ENCODE measurements at regions of chr1 and their contacts with region 1.

Region 1: DNA sequence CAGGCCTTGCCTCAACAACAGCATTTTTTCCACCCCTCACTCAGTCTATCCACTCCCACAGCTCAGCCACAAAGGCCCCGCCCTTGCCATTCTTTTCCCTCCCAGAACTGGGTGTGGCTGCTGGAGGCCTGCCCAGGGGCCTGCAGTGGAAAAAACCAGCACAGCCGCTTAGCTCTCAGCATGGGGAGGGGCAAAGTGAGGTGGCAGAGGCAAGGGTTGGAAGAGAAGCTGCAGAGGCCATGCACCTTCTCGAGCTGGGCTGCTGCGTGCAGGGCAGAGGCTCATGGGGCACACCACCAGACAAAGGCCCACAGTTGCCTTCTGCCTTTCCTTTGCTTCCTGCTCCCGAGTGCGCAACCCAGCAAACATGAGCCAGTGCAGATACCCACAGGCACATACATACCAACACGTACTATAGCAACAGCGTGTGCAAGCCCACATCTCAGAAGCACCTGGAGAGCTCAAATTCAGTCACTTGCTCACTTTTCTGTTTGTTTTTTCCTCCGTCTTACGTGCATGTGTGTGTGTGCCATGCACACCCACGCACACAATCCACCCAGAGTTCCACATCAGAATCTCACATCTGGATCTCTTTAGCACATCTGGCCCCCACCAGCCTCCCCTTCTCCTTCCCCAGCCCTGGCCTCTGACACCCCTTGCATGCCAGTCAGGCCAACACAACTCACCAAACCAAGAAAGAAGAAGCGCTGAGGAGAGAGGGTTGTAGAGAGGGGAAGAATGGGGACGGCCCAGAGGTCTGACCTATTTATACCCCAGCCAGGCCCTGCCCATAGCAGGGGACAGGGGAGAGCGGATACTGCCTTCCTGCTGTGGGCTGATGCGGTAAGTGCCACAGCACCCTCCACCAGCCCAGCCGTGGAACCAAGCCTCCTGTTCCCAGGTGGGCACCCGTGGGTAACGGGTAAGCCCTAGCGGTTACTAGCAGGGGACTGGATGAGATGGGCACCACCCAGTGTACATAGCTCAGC is at the start of gene S100A4:
- DNase-seq: peak; percentile 47 to 91 (median 83)
- ATAC-seq: peak; percentile 74
- H3K4me3 ChIP-seq: peak within 1 kb of the TSS; percentile 56 to 64
- H3K4me3 Mint-ChIP-seq: peak within 1 kb of the TSS; percentile 87
- H3K27ac ChIP-seq: peak within 1 kb of the TSS; percentile 66 to 69
- H3K27ac Mint-ChIP-seq: peak within 1 kb of the TSS; percentile 91
- H3K4me1 ChIP-seq: peaks cover 65% of the 10 kb centered on the region
- H3K4me1 Mint-ChIP-seq: peaks cover 66% of the 10 kb centered on the region
- H3K27me3 ChIP-seq: no peaks in the 10 kb centered on the region
- H3K27me3 Mint-ChIP-seq: no peaks in the 10 kb centered on the region
- CTCF ChIP-seq: no peak
- total RNA-seq, gene S100A4: 172 to 177 TPM

Region 2: GRCh38 chr1:153561466-153561985 is 16.2 kb after region 1 on chr1:
- CTCF ChIA-PET with region 1: interaction called, 8 read pairs
- POLR2A ChIA-PET with region 1: interaction called, 12 read pairs
- intact Hi-C with region 1: loop called in 1 of 2 experiments (anchors 2 kb)
- DNase-seq: no peak
- ATAC-seq: no peak
- H3K4me3 ChIP-seq: no peak overlapping the region
- H3K4me3 Mint-ChIP-seq: no peak overlapping the region
- H3K27ac ChIP-seq: no peak overlapping the region
- H3K27ac Mint-ChIP-seq: no peak overlapping the region
- H3K4me1 ChIP-seq: peaks cover 11% of the 10 kb centered on the region
- H3K4me1 Mint-ChIP-seq: peaks cover 7% of the 10 kb centered on the region
- H3K27me3 ChIP-seq: no peaks in the 10 kb centered on the region
- H3K27me3 Mint-ChIP-seq: no peaks in the 10 kb centered on the region
- CTCF ChIP-seq: no peak

Region 3: GRCh38 chr1:153566440-153567379 is 21.3 kb after region 1 on chr1:
- CTCF ChIA-PET with region 1: interaction called, 41 read pairs
- POLR2A ChIA-PET with region 1: interaction called, 7 read pairs
- intact Hi-C with region 1: loop called (anchors 1 to 2 kb)
- DNase-seq: peak; percentile 38 to 90 (median 80)
- ATAC-seq: peak; percentile 82
- H3K4me3 ChIP-seq: no peak overlapping the region
- H3K4me3 Mint-ChIP-seq: no peak overlapping the region
- H3K27ac ChIP-seq: peak overlapping the region in 1 of 2 experiments; percentile 67
- H3K27ac Mint-ChIP-seq: peak overlapping the region; percentile 69
- H3K4me1 ChIP-seq: peaks cover 17% of the 10 kb centered on the region
- H3K4me1 Mint-ChIP-seq: peaks cover 26% of the 10 kb centered on the region
- H3K27me3 ChIP-seq: no peaks in the 10 kb centered on the region
- H3K27me3 Mint-ChIP-seq: peaks cover 8% of the 10 kb centered on the region
- CTCF ChIP-seq: no peak

Region 4: GRCh38 chr1:153608742-153609584 is 63.6 kb after region 1 on chr1:
- CTCF ChIA-PET with region 1: no interaction called
- POLR2A ChIA-PET with region 1: no interaction called
- intact Hi-C with region 1: no loop called
- DNase-seq: no peak
- ATAC-seq: no peak
- H3K4me3 ChIP-seq: no peak overlapping the region
- H3K4me3 Mint-ChIP-seq: no peak overlapping the region
- H3K27ac ChIP-seq: no peak overlapping the region
- H3K27ac Mint-ChIP-seq: peak overlapping the region; percentile 14
- H3K4me1 ChIP-seq: no peaks in the 10 kb centered on the region
- H3K4me1 Mint-ChIP-seq: no peaks in the 10 kb centered on the region
- H3K27me3 ChIP-seq: no peaks in the 10 kb centered on the region
- H3K27me3 Mint-ChIP-seq: no peaks in the 10 kb centered on the region
- CTCF ChIP-seq: no peak

Region 5: DNA sequence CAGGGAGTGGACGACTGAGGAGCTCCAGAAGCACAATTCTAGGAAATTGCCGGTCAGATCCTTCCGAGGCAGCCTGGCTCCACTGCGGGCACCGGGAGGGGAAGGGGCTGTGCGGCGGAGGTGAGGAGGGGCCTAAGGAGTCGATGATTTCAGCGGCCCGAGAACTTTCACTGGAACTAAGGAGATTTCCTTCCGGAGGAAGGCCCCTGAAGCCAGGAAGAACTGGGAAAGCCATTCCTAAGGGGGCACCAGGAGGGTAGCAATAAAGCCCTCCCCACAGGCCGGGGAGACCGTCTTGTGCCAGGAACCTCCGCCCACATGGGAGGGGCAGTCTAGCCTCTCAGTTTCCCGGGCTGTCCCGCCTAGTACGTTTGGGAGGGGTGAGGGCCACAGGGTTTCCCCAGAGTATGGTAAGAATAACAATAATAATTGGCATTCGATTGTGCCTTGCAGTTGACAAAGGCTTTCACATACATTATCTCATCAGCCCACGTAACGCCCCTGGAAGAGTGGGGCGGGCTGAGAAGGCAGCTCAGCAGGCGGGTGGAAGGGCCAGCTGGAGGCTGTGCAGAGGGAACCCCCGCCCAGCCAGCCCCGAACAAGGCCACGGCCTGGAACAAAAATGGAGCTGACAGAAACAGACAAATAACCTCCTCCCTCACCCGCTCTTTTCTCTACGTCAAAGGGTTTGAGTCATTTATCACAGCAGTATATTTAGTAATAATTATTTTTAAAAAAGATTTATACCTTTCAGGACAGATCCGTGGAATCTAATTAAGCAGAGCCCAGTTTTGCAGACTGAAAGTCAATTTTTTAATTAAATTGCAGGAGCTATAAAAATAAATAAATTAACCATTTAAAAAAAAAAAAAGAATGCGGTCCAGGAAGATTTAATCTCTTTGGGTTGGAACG is 152.9 kb after region 1 on chr1:
- CTCF ChIA-PET with region 1: no interaction called
- POLR2A ChIA-PET with region 1: no interaction called
- intact Hi-C with region 1: no loop called
- DNase-seq: no peak
- ATAC-seq: no peak
- H3K4me3 ChIP-seq: no peak overlapping the region
- H3K4me3 Mint-ChIP-seq: no peak overlapping the region
- H3K27ac ChIP-seq: no peak overlapping the region
- H3K27ac Mint-ChIP-seq: no peak overlapping the region
- H3K4me1 ChIP-seq: no peaks in the 10 kb centered on the region
- H3K4me1 Mint-ChIP-seq: peaks cover 2% of the 10 kb centered on the region
- H3K27me3 ChIP-seq: peaks cover 0 to 4% of the 10 kb centered on the region in 2 experiments
- H3K27me3 Mint-ChIP-seq: no peaks in the 10 kb centered on the region
- CTCF ChIP-seq: no peak

Region 6: GRCh38 chr1:154419620-154420571 is 874.5 kb after region 1 on chr1:
- CTCF ChIA-PET with region 1: no interaction called
- POLR2A ChIA-PET with region 1: no interaction called
- intact Hi-C with region 1: no loop called
- DNase-seq: peak in 7 of 9 experiments; percentile 21 to 76 (median 53)
- ATAC-seq: peak; percentile 71
- H3K4me3 ChIP-seq: peak overlapping the region in 1 of 2 experiments; percentile 39
- H3K4me3 Mint-ChIP-seq: peak overlapping the region; percentile 76
- H3K27ac ChIP-seq: peak overlapping the region; percentile 29 to 46
- H3K27ac Mint-ChIP-seq: peak overlapping the region; percentile 94
- H3K4me1 ChIP-seq: peaks cover 60% of the 10 kb centered on the region
- H3K4me1 Mint-ChIP-seq: peaks cover 66% of the 10 kb centered on the region
- H3K27me3 ChIP-seq: no peaks in the 10 kb centered on the region
- H3K27me3 Mint-ChIP-seq: no peaks in the 10 kb centered on the region
- CTCF ChIP-seq: no peak

Measured in CD8-positive, alpha-beta T cell (primary cell).